Activated CD8-positive, alpha-beta memory T cell treated with anti-CD3 and anti-CD28 coated beads, Interleukin-2, amount 10 ng/mL, durations not matched to agents 7 days and 5 days (primary cell): ENCODE measurements at regions of chr16 and their contacts with region 1.

Region 1: GRCh38 chr16:28863929-28864793 is 518 bp downstream of the SH2B1 start:
- DNase-seq: no peak
- ATAC-seq: no peak
- H3K4me3 Mint-ChIP-seq: peak overlapping the region; percentile 89
- H3K27ac Mint-ChIP-seq: peak overlapping the region; percentile 96
- H3K4me1 Mint-ChIP-seq: peaks cover 23% of the 10 kb centered on the region
- H3K27me3 Mint-ChIP-seq: no peaks in the 10 kb centered on the region

Region 2: GRCh38 chr16:28609631-28610594 is 254.2 kb before region 1 on chr16 and contains the start of gene SULT1A1:
- CTCF ChIA-PET with region 1: no interaction called
- DNase-seq: no peak
- ATAC-seq: no peak
- H3K4me3 Mint-ChIP-seq: no peak within 1 kb of the TSS
- H3K27ac Mint-ChIP-seq: no peak within 1 kb of the TSS
- H3K4me1 Mint-ChIP-seq: peaks cover 9% of the 10 kb centered on the region
- H3K27me3 Mint-ChIP-seq: no peaks in the 10 kb centered on the region
- total RNA-seq, gene SULT1A1: 13.5 to 14.1 TPM

Region 3: DNA sequence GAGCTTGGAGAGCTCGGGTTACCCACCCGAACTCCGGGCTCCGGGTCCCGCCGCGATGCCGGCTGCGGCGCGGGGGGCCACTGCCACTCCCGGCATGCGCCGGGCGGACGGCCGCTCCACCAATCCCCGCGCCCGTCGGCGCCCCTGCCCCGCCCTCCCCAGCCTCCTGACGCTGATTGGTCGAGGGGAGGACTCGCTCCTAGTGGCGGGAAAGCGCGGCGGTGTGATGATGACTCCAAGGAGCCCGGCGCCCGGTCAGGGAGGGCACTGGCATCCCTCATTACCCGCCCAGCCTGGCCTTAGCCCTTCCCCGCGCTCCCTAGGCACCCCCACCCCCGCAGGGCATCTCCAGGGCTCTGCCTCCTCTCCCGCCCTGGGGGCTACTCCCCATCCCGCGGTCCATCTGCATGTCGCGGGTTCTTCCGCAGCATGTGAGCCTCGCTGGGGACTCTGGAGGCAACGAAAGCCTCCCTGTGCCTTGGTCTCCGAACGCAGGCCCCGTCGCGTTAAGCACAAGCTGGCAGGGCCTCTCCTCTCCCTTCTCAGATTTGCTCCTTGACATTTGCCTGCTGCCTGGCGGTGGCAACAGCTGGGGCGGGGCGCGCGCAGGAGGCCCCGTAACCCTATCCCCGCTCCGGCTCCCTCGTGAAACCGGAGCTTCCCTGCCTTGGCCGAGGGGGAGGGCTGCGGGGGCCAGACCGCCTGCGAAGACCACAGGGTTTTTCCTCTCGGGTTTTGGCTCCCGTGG is 15.9 kb after region 1 on chr16:
- CTCF ChIA-PET with region 1: interaction called, 16 read pairs
- DNase-seq: peak; percentile 96
- ATAC-seq: peak; percentile 98
- H3K4me3 Mint-ChIP-seq: peak overlapping the region; percentile 88
- H3K27ac Mint-ChIP-seq: peak overlapping the region; percentile 76
- H3K4me1 Mint-ChIP-seq: peaks cover 40% of the 10 kb centered on the region
- H3K27me3 Mint-ChIP-seq: peaks cover 3% of the 10 kb centered on the region

Region 4: DNA sequence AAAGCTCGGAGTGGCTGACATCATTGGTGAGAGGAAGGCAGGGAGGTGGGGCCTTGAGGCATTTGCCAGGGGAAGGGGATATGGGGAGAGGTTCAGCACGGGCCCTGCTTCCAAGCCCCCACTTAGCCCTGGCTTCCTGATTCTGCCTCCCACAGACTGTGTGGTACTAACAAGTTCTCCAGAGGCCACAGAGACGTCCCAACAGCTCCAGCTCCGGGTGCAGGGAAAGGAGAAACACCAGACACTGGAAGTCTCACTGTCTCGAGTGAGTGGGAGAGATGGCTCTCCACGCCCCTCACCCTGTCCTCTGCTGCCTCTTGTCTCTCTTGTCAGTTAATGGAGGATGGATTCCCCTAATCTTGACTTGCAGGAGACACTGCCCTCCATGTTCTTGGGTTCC is 94.7 kb after region 1 on chr16:
- CTCF ChIA-PET with region 1: no interaction called
- DNase-seq: no peak
- ATAC-seq: no peak
- H3K4me3 Mint-ChIP-seq: no peak overlapping the region
- H3K27ac Mint-ChIP-seq: no peak overlapping the region
- H3K4me1 Mint-ChIP-seq: peaks cover 7% of the 10 kb centered on the region
- H3K27me3 Mint-ChIP-seq: no peaks in the 10 kb centered on the region

Region 5: GRCh38 chr16:29139261-29139811 is 275.2 kb after region 1 on chr16:
- CTCF ChIA-PET with region 1: no interaction called
- DNase-seq: no peak
- ATAC-seq: no peak
- H3K4me3 Mint-ChIP-seq: no peak overlapping the region
- H3K27ac Mint-ChIP-seq: no peak overlapping the region
- H3K4me1 Mint-ChIP-seq: peaks cover 6% of the 10 kb centered on the region
- H3K27me3 Mint-ChIP-seq: no peaks in the 10 kb centered on the region